K562 (cell line): ENCODE measurements at regions of chr19 and their contacts with region 1.

Region 1: GRCh38 chr19:5154129-5154798 is 185.4 kb downstream of the KDM4B start:
- DNase-seq: peak; percentile 75 to 79 (median 78)
- ATAC-seq: peak; percentile 95
- H3K4me3 ChIP-seq: no peak overlapping the region
- H3K27ac ChIP-seq: no peak overlapping the region
- H3K4me1 ChIP-seq: peaks cover 0 to 40% of the 10 kb centered on the region in 2 experiments; a peak in 2 of 5 replicates
- H3K27me3 ChIP-seq: no peaks in the 10 kb centered on the region
- CTCF ChIP-seq: peak; percentile 65 to 77 (median 69)
- EP300 ChIP-seq: no peak
- POLR2A ChIP-seq: 0 out of 2 replicates have a peak, but pooled peaks have one; percentile 20
- RAD21 ChIP-seq: peak in 1 of 2 experiments; percentile 52; a peak in 2 of 4 replicates

Region 2: GRCh38 chr19:5048091-5048726 is 106.1 kb before region 1 on chr19:
- CTCF ChIA-PET with region 1: interaction called, 4 read pairs
- POLR2A ChIA-PET with region 1: interaction called, 3 read pairs
- in situ Hi-C with region 1: no loop called
- intact Hi-C with region 1: loop called (anchors 5 kb)
- DNase-seq: peak; percentile 83 to 92 (median 89)
- ATAC-seq: peak; percentile 99
- H3K4me3 ChIP-seq: no peak overlapping the region
- H3K27ac ChIP-seq: no peak overlapping the region
- H3K4me1 ChIP-seq: peaks cover 0 to 44% of the 10 kb centered on the region in 2 experiments; a peak in 3 of 5 replicates
- H3K27me3 ChIP-seq: no peaks in the 10 kb centered on the region
- CTCF ChIP-seq: peak; percentile 93 to 96 (median 95)
- EP300 ChIP-seq: no peak
- POLR2A ChIP-seq: no peak
- RAD21 ChIP-seq: peak; percentile 68 to 90

Region 3: DNA sequence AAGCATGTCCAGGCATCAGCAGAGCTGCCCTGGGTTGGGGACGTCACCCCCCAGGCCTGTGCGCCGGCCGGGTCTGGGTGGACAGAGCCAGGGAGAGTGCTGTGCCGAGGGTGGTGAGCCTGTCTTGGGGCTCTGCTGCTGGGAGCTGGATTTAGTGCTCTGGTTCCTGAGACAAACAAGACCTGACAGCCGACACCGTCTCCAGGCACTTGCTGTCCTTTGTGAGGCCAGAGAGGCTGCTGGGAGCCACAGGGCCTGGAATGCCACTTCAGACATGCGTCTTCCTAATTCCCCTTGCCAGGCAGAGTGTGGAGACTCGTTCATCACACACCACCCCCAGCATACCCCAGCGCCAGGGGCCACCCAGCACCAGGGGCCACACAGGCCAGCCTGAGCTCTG is 19.6 kb before region 1 on chr19:
- CTCF ChIA-PET with region 1: no interaction called
- POLR2A ChIA-PET with region 1: no interaction called
- in situ Hi-C with region 1: no loop called
- intact Hi-C with region 1: no loop called
- DNase-seq: no peak
- ATAC-seq: no peak
- H3K4me3 ChIP-seq: no peak overlapping the region
- H3K27ac ChIP-seq: no peak overlapping the region
- H3K4me1 ChIP-seq: peaks cover 0 to 60% of the 10 kb centered on the region in 2 experiments; a peak in 3 of 5 replicates
- H3K27me3 ChIP-seq: no peaks in the 10 kb centered on the region
- CTCF ChIP-seq: no peak
- EP300 ChIP-seq: no peak
- POLR2A ChIP-seq: no peak
- RAD21 ChIP-seq: no peak

Region 4: DNA sequence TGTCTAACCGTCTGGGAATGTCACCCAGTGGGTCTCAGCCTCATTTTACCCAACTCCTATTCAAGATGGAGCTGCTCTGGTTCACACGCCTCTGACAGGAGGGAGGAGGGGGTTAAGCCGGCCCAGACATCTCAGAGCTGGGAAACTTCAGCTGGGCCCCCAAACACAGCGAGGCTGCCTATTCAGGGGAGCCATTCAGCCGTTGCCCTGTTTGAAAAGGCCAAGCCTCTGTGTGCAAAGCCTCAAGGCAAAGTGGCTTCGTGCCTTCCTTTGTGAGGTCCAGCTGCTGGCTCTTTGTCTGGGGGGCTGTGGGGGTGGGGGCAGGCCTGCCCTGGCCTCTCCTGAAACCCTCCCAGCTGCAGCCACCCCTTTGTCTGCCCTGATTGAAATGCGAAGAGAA is 38.9 kb after region 1 on chr19:
- CTCF ChIA-PET with region 1: no interaction called
- POLR2A ChIA-PET with region 1: no interaction called
- in situ Hi-C with region 1: no loop called
- intact Hi-C with region 1: no loop called
- DNase-seq: no peak
- ATAC-seq: no peak
- H3K4me3 ChIP-seq: no peak overlapping the region
- H3K27ac ChIP-seq: no peak overlapping the region
- H3K4me1 ChIP-seq: no peaks in the 10 kb centered on the region; a peak in 1 of 5 replicates
- H3K27me3 ChIP-seq: peaks cover 3 to 4% of the 10 kb centered on the region in 2 experiments; a peak in 2 of 5 replicates
- CTCF ChIP-seq: no peak
- EP300 ChIP-seq: no peak
- POLR2A ChIP-seq: no peak
- RAD21 ChIP-seq: no peak